Mammary epithelial cell (primary cell): ENCODE measurements at regions of chr3 and their contacts with region 1.

Region 1: GRCh38 chr3:68876112-68876713 is 56.1 kb downstream of the TAFA4 start:
- DNase-seq: peak; percentile 46
- H3K4me3 ChIP-seq: no peak overlapping the region
- H3K27ac ChIP-seq: no peak overlapping the region
- H3K4me1 ChIP-seq: no peaks in the 10 kb centered on the region
- H3K27me3 ChIP-seq: peaks cover 1% of the 10 kb centered on the region
- CTCF ChIP-seq: peak; percentile 82 to 98

Region 2: GRCh38 chr3:66938338-66938963 is 1937.8 kb before region 1 on chr3:
- CTCF ChIA-PET with region 1: interaction called, 3 read pairs
- dilution Hi-C with region 1: no loop called
- in situ Hi-C with region 1: no loop called
- intact Hi-C with region 1: loop called (anchors 5 kb)
- DNase-seq: peak; percentile 46
- H3K4me3 ChIP-seq: no peak overlapping the region
- H3K27ac ChIP-seq: no peak overlapping the region
- H3K4me1 ChIP-seq: no peaks in the 10 kb centered on the region
- H3K27me3 ChIP-seq: peaks cover 3% of the 10 kb centered on the region
- CTCF ChIP-seq: peak; percentile 67 to 81

Region 3: GRCh38 chr3:66971891-66972551 is 1904.2 kb before region 1 on chr3:
- CTCF ChIA-PET with region 1: no interaction called
- dilution Hi-C with region 1: no loop called
- in situ Hi-C with region 1: loop called (anchors 25 kb)
- intact Hi-C with region 1: loop called (anchors 1 kb)
- DNase-seq: peak; percentile 43
- H3K4me3 ChIP-seq: peak overlapping the region; percentile 8 to 19 (median 14)
- H3K27ac ChIP-seq: no peak overlapping the region
- H3K4me1 ChIP-seq: no peaks in the 10 kb centered on the region
- H3K27me3 ChIP-seq: peaks cover 3% of the 10 kb centered on the region
- CTCF ChIP-seq: peak; percentile 83 to 85

Region 4: GRCh38 chr3:66998113-66998903 is 1877.9 kb before region 1 on chr3 and contains the start of gene KBTBD8:
- CTCF ChIA-PET with region 1: no interaction called
- dilution Hi-C with region 1: no loop called
- in situ Hi-C with region 1: loop called in 1 of 2 experiments (anchors 25 kb)
- intact Hi-C with region 1: no loop called
- DNase-seq: peak; percentile 99
- H3K4me3 ChIP-seq: peak within 1 kb of the TSS; percentile 62 to 82 (median 80)
- H3K27ac ChIP-seq: peak within 1 kb of the TSS; percentile 49
- H3K4me1 ChIP-seq: peaks cover 23% of the 10 kb centered on the region
- H3K27me3 ChIP-seq: no peaks in the 10 kb centered on the region
- CTCF ChIP-seq: no peak
- total RNA-seq, gene KBTBD8: 3.5 to 3.7 TPM

Region 5: GRCh38 chr3:67113802-67114407 is 1762.3 kb before region 1 on chr3:
- CTCF ChIA-PET with region 1: no interaction called
- dilution Hi-C with region 1: no loop called
- in situ Hi-C with region 1: loop called (anchors 10 to 25 kb)
- intact Hi-C with region 1: loop called (anchors 1 kb)
- DNase-seq: peak; percentile 78
- H3K4me3 ChIP-seq: no peak overlapping the region
- H3K27ac ChIP-seq: no peak overlapping the region
- H3K4me1 ChIP-seq: no peaks in the 10 kb centered on the region
- H3K27me3 ChIP-seq: no peaks in the 10 kb centered on the region
- CTCF ChIP-seq: peak; percentile 99

Region 6: GRCh38 chr3:67384760-67385397 is 1491.3 kb before region 1 on chr3:
- CTCF ChIA-PET with region 1: no interaction called
- dilution Hi-C with region 1: no loop called
- in situ Hi-C with region 1: no loop called
- intact Hi-C with region 1: loop called (anchors 5 kb)
- DNase-seq: peak; percentile 17
- H3K4me3 ChIP-seq: no peak overlapping the region
- H3K27ac ChIP-seq: no peak overlapping the region
- H3K4me1 ChIP-seq: no peaks in the 10 kb centered on the region
- H3K27me3 ChIP-seq: no peaks in the 10 kb centered on the region
- CTCF ChIP-seq: peak; percentile 60 to 63

Region 7: DNA sequence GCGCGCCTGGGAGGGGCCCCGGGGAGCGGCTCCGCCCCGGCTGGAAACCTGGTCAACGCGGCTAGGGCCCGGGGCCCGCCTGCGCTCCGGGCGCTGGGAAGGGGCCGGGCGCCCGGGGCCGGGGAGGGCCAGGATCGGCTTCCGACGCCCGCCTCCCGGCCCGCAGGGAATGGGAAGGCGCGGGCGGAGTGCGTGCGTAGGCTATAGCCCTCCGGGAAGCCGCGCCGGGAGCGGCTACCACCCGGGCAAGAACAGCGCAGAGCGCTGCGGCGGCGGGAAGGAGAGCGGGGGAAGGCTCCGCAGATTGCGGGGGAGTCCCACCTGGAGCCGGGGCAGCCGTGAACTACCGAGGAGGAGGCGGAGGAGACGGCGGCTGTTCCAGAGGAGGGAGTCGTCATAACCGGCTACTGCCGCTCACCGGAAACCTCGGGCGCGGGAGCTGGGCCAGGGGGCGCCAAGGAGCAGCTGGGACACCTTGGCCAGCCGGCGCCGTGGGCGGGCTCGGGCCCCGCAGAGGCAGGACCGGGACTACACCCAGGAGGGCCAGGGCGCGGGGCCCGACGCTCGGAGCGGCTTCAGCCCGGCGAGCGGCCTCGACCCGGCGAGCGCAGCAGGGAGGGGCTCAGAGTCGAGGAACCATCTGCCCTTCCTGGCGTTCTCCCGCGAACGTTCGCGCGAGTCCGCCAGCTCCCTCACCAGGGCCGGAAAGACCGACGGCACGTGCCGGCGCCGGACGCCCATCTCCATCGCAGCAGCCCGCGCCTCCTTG is 137.2 kb after region 1 on chr3 and contains the start of gene EOGT:
- CTCF ChIA-PET with region 1: no interaction called
- dilution Hi-C with region 1: no loop called
- in situ Hi-C with region 1: no loop called
- intact Hi-C with region 1: no loop called
- DNase-seq: peak; percentile 85
- H3K4me3 ChIP-seq: peak within 1 kb of the TSS; percentile 67 to 83 (median 82)
- H3K27ac ChIP-seq: peak within 1 kb of the TSS; percentile 87
- H3K4me1 ChIP-seq: peaks cover 49% of the 10 kb centered on the region
- H3K27me3 ChIP-seq: no peaks in the 10 kb centered on the region
- CTCF ChIP-seq: peak; percentile 26 to 73
- total RNA-seq, gene EOGT: 52.4 to 194 TPM